Mammary epithelial cell (primary cell): ENCODE measurements at regions of chr17 and their contacts with region 1.

Region 1: GRCh38 chr17:27407916-27408846 is 48.1 kb upstream of the KSR1 start:
- DNase-seq: peak; percentile 48
- H3K4me3 ChIP-seq: no peak overlapping the region
- H3K27ac ChIP-seq: no peak overlapping the region
- H3K4me1 ChIP-seq: peaks cover 10% of the 10 kb centered on the region
- H3K27me3 ChIP-seq: no peaks in the 10 kb centered on the region
- CTCF ChIP-seq: no peak

Region 2: DNA sequence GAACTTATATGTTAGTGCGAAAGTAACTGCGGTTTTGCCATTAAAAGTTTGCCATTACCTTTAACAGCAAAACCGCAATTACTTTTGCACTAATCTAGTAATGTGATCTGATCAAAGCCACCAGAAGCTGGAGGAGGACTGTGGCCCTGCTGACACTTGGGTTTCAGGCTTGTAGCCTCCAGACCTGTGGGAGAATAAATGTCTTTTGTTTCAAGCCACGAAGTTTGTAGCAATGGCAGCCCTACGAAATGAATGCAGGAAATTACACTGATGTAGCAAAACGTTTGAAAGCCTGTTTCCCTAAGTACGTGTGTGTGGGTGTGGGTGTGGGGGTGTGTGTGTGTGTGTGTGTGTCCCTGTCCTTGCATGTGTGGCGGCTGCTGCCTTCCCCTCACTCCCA is 47.7 kb before region 1 on chr17:
- CTCF ChIA-PET with region 1: no interaction called
- dilution Hi-C with region 1: loop called (anchors 5 kb)
- in situ Hi-C with region 1: no loop called
- intact Hi-C with region 1: no loop called
- DNase-seq: no peak
- H3K4me3 ChIP-seq: no peak overlapping the region
- H3K27ac ChIP-seq: no peak overlapping the region
- H3K4me1 ChIP-seq: no peaks in the 10 kb centered on the region
- H3K27me3 ChIP-seq: no peaks in the 10 kb centered on the region
- CTCF ChIP-seq: no peak

Region 3: DNA sequence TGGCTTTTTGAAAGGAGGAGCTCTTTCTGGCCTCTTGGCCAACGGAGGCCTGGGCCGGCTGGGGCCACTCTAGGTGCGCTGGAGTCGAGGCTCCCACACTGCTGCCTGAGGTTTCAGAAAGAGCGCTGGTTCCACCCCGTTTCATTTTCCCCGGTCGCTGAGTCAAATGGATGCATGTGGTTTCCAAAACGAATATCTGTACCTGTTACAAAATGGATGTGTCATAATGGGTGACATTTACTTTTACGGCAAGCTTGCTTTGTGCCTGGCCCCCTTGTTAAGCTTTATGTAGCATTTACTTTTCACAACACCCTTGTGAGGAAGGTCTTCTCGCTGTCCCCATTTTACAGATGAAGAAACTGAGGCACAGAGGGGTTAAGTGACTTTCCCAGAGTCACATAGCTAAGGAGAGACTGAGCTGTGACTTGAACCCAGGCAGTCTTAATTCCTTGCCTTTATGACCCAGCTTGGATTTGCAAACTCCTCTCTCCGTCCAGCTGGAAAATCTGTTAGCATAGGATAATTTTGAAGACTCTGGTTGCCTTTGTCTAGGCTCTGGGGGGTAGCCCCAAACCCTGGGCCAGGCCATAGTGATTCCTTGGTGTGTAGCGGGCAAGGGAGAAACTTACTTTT is 58.7 kb after region 1 on chr17:
- CTCF ChIA-PET with region 1: no interaction called
- dilution Hi-C with region 1: loop called (anchors 5 kb)
- in situ Hi-C with region 1: no loop called
- intact Hi-C with region 1: no loop called
- DNase-seq: no peak
- H3K4me3 ChIP-seq: no peak overlapping the region
- H3K27ac ChIP-seq: no peak overlapping the region
- H3K4me1 ChIP-seq: peaks cover 7% of the 10 kb centered on the region
- H3K27me3 ChIP-seq: peaks cover 2% of the 10 kb centered on the region
- CTCF ChIP-seq: no peak

Region 4: DNA sequence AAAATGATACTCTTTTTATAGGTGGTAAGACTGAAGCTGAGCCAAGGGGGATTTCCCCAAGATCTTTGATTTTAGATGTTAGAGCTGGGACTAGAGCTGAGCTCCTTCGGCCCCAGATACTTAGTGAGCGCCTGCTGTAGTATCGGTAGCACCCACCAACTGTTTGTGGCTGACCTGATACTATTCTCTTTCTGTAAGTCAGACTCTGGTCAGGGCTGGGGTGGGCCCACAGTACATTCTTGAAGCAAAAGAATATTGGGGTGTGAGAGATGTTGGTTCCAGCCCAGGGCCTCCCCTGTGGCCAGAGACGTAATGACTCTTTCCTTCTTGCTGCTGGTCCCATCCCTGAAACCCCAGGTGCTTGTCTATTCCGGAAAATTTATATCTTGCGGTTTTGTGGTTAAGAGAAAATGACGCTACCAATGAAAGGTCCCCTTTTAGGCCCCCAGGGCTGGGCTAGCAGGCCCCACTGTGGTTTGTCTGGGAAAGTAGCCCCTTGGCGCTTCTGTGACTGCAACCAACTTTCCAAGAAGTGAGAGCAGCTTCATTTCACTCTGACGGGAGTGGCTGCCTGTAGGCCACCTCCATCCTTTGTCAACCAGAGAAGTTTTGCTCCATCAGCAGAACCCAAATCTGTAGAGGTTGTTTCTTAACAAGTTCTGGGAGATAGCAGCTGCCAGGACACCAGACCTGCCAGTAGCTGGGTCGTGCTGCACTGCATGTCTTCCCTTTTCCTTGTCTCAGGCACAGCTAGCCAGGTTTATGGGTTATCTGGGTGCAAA is 136.4 kb after region 1 on chr17:
- CTCF ChIA-PET with region 1: no interaction called
- dilution Hi-C with region 1: loop called (anchors 5 kb)
- in situ Hi-C with region 1: no loop called
- intact Hi-C with region 1: no loop called
- DNase-seq: peak; percentile 54
- H3K4me3 ChIP-seq: no peak overlapping the region
- H3K27ac ChIP-seq: no peak overlapping the region
- H3K4me1 ChIP-seq: no peaks in the 10 kb centered on the region
- H3K27me3 ChIP-seq: no peaks in the 10 kb centered on the region
- CTCF ChIP-seq: no peak

Region 5: GRCh38 chr17:27586203-27586721 is 178.1 kb after region 1 on chr17:
- CTCF ChIA-PET with region 1: no interaction called
- dilution Hi-C with region 1: loop called (anchors 5 kb)
- in situ Hi-C with region 1: no loop called
- intact Hi-C with region 1: no loop called
- DNase-seq: no peak
- H3K4me3 ChIP-seq: no peak overlapping the region
- H3K27ac ChIP-seq: no peak overlapping the region
- H3K4me1 ChIP-seq: no peaks in the 10 kb centered on the region
- H3K27me3 ChIP-seq: no peaks in the 10 kb centered on the region
- CTCF ChIP-seq: no peak

Region 6: GRCh38 chr17:27760069-27760885 is 352.1 kb after region 1 on chr17:
- CTCF ChIA-PET with region 1: no interaction called
- dilution Hi-C with region 1: no loop called
- in situ Hi-C with region 1: loop called in 1 of 2 experiments (anchors 25 kb)
- intact Hi-C with region 1: no loop called
- DNase-seq: peak; percentile 19
- H3K4me3 ChIP-seq: no peak overlapping the region
- H3K27ac ChIP-seq: no peak overlapping the region
- H3K4me1 ChIP-seq: no peaks in the 10 kb centered on the region
- H3K27me3 ChIP-seq: no peaks in the 10 kb centered on the region
- CTCF ChIP-seq: peak; percentile 60 to 84